Left ventricle myocardium superior (tissue), 1 donor: ENCODE measurements at regions of chr19 and their contacts with region 1.

Region 1: DNA sequence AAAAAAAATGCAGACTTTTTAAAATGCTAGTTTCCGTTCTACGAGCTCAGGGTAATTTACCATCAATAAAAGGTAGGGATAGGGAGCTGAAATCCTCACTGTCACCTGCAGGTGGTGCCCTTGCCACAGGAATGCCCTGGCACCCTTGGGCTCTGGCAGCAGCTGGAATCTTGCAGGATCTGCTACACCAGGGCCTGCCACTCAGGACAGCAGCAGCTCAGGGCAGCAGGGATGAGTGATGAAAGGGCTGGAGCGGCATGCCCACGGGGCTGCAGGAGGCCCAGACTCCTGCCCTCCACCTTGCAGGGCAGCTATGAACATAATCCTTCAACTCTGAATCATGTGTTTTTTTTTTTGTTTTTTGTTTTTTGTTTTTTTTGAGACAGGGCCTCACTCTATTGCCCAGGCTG is 54.0 kb downstream of the GNG7 start:
- DNase-seq: peak; percentile 78
- ATAC-seq: peak; percentile 85

Region 2: DNA sequence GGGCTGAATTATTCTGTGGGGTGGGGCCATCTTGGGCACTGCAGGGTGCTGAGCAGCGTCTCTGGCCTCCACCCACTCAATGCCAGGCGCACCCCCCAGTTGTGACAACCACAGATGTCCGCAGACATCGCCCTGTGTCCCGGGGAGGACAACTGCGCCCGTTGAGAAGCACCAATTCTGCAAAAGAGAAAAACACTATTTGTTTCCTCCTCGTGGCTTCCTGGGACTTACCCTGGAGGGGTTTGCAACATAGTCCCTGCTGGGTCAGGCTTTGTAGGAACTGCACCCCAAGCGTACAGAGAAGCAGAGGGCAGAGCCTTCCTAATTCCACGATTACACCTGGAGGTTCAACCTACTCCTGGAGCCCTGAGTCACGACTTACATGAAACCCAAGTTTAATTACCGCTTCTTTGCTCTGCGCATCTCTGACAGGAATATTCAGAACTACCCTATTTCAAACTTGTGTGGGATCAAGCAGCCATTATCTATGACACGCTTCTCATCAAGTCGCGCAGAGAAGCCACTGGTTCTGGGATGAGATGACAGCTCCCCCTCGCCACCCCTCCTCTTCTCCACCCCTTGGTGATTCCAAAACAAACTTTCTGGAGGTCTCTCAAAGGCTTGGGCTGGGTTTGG is 102.4 kb after region 1 on chr19:
- intact Hi-C with region 1: loop called (anchors 5 kb)
- DNase-seq: no peak
- ATAC-seq: no peak